CD4-positive, alpha-beta T cell (primary cell): ENCODE measurements at regions of chr15 and their contacts with region 1.

Region 1: GRCh38 chr15:44501768-44502366 is 35.1 kb upstream of the EIF3J start:
- DNase-seq: peak in 3 of 14 experiments; percentile 49 to 54 (median 50)
- ATAC-seq: peak; percentile 67
- H3K4me3 ChIP-seq: no peak overlapping the region
- H3K4me3 Mint-ChIP-seq: no peak overlapping the region
- H3K27ac ChIP-seq: no peak overlapping the region
- H3K27ac Mint-ChIP-seq: peak overlapping the region; percentile 64
- H3K4me1 ChIP-seq: no peaks in the 10 kb centered on the region
- H3K4me1 Mint-ChIP-seq: peaks cover 20% of the 10 kb centered on the region
- H3K27me3 ChIP-seq: no peaks in the 10 kb centered on the region
- H3K27me3 Mint-ChIP-seq: no peaks in the 10 kb centered on the region
- CTCF ChIP-seq: peak; percentile 80

Region 2: DNA sequence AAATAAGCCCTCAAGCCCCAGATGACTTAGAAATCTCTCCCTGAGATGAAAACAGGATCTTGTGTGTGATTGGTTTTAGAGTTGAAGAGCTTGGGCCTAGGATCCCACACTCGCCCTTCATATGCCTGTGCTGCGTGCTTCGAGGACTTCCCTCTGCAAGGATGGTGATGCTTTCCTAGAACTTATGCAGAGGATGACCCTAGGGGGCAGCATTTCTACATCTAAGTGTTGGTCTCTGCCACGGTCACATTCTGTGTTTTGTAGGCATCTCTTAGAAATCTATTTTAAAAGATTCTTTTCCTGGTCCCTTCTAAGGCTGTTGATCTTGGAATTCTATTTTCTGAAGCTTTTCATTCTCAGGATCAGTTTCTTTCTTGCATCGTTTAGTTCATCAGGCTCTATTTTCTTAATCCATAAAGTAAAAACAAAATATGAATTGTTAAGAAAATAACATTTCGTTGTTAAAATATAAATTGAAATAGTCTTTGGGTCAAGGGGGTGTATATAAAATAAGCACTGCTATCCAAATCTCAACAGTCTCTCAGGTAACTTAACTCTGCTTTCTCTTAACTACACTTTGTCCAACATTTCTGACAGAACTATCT is 629.3 kb before region 1 on chr15:
- CTCF ChIA-PET with region 1: no interaction called
- POLR2A ChIA-PET with region 1: no interaction called
- intact Hi-C with region 1: loop called in 1 of 2 experiments (anchors 10 kb)
- DNase-seq: peak in 4 of 14 experiments; percentile 15 to 43 (median 26)
- ATAC-seq: no peak
- H3K4me3 ChIP-seq: no peak overlapping the region
- H3K4me3 Mint-ChIP-seq: no peak overlapping the region
- H3K27ac ChIP-seq: no peak overlapping the region
- H3K27ac Mint-ChIP-seq: no peak overlapping the region
- H3K4me1 ChIP-seq: no peaks in the 10 kb centered on the region
- H3K4me1 Mint-ChIP-seq: no peaks in the 10 kb centered on the region
- H3K27me3 ChIP-seq: no peaks in the 10 kb centered on the region
- H3K27me3 Mint-ChIP-seq: no peaks in the 10 kb centered on the region
- CTCF ChIP-seq: peak; percentile 26

Region 3: DNA sequence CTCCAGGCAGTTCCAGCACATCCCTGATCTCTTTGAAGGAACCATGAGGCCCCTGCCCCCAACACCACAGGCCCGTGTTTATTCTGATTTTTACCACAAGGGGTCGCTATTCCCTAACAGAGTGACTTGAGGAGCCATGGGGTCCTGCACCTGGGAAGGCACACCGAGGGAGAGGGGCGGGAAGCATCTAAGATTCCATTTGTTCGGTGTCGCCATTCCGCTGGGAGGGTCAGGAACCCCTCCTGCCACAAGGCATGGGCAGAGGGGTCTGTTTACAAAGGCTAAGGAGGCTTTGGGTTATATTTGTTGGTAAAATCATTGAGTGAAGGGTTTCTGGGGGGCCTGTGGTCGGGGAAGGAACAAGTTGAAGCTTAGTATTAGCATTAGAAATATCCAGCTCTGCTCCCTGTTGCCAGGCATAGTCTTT is 598.0 kb before region 1 on chr15:
- CTCF ChIA-PET with region 1: no interaction called
- POLR2A ChIA-PET with region 1: no interaction called
- intact Hi-C with region 1: loop called in 1 of 2 experiments (anchors 5 kb)
- DNase-seq: peak; percentile 12 to 69 (median 28)
- ATAC-seq: peak; percentile 61
- H3K4me3 ChIP-seq: no peak overlapping the region
- H3K4me3 Mint-ChIP-seq: no peak overlapping the region
- H3K27ac ChIP-seq: no peak overlapping the region
- H3K27ac Mint-ChIP-seq: no peak overlapping the region
- H3K4me1 ChIP-seq: peaks cover 10% of the 10 kb centered on the region
- H3K4me1 Mint-ChIP-seq: peaks cover 4% of the 10 kb centered on the region
- H3K27me3 ChIP-seq: no peaks in the 10 kb centered on the region
- H3K27me3 Mint-ChIP-seq: no peaks in the 10 kb centered on the region
- CTCF ChIP-seq: peak; percentile 61

Region 4: GRCh38 chr15:44222478-44222877 is 279.4 kb before region 1 on chr15:
- CTCF ChIA-PET with region 1: no interaction called
- POLR2A ChIA-PET with region 1: no interaction called
- intact Hi-C with region 1: loop called in 1 of 2 experiments (anchors 5 kb)
- DNase-seq: no peak
- ATAC-seq: no peak
- H3K4me3 ChIP-seq: no peak overlapping the region
- H3K4me3 Mint-ChIP-seq: no peak overlapping the region
- H3K27ac ChIP-seq: no peak overlapping the region
- H3K27ac Mint-ChIP-seq: no peak overlapping the region
- H3K4me1 ChIP-seq: no peaks in the 10 kb centered on the region
- H3K4me1 Mint-ChIP-seq: no peaks in the 10 kb centered on the region
- H3K27me3 ChIP-seq: no peaks in the 10 kb centered on the region
- H3K27me3 Mint-ChIP-seq: peaks cover 23% of the 10 kb centered on the region
- CTCF ChIP-seq: no peak

Region 5: GRCh38 chr15:45522328-45523160 is 1020.7 kb after region 1 on chr15 and contains the start of gene SLC30A4:
- CTCF ChIA-PET with region 1: no interaction called
- POLR2A ChIA-PET with region 1: no interaction called
- intact Hi-C with region 1: no loop called
- DNase-seq: peak; percentile 31 to 87 (median 54)
- ATAC-seq: peak; percentile 86
- H3K4me3 ChIP-seq: peak within 1 kb of the TSS; percentile 87
- H3K4me3 Mint-ChIP-seq: peak within 1 kb of the TSS; percentile 97
- H3K27ac ChIP-seq: no peak within 1 kb of the TSS
- H3K27ac Mint-ChIP-seq: peak within 1 kb of the TSS; percentile 73
- H3K4me1 ChIP-seq: peaks cover 19% of the 10 kb centered on the region
- H3K4me1 Mint-ChIP-seq: peaks cover 18% of the 10 kb centered on the region
- H3K27me3 ChIP-seq: no peaks in the 10 kb centered on the region
- H3K27me3 Mint-ChIP-seq: no peaks in the 10 kb centered on the region
- CTCF ChIP-seq: peak; percentile 54
- total RNA-seq, gene SLC30A4: 2.1 to 2.3 TPM